HepG2 (cell line): ENCODE measurements at regions of chr16 and their contacts with region 1.

Region 1: GRCh38 chr16:81940781-81941560 is 70.3 kb downstream of the SDR42E1 start:
- DNase-seq: peak; percentile 47
- ATAC-seq: peak; percentile 55; the same call in 2 of the 3 replicates
- H3K4me3 ChIP-seq: no peak overlapping the region
- H3K27ac ChIP-seq: no peak overlapping the region
- H3K4me1 ChIP-seq: no peaks in the 10 kb centered on the region
- H3K27me3 ChIP-seq: peaks cover 0 to 30% of the 10 kb centered on the region in 2 experiments; a peak in 3 of 5 replicates
- CTCF ChIP-seq: peak; percentile 57
- EP300 ChIP-seq: no peak
- POLR2A ChIP-seq: no peak
- RAD21 ChIP-seq: no peak

Region 2: DNA sequence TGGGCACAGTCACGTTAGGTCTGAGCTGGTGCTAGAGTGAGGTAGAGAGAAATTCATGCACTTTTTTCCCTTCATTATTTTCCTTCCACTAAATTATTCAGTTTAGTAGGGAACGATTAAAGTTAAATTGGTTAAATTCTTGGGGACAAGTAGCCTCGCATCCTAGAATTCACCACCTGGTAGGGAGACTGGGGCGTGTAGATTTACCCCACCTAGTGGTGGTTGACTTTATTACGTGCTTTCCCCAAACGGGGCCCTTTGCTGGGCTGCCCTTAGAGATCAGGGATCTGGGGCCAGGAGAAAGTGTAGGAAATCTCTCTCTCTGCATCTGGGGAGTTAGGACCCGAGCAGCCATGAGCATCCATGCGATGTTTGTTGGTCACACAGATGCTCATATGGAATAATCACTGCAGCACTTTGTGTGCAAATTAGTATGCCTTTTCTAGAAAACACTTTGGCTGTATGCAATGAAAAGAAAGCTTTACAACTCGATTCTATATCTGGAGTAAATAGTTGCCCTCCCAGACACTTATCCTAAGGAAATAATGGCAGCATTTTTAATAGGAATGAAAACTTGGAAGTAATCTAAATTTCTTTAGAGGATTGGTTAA is 54.9 kb before region 1 on chr16:
- CTCF ChIA-PET with region 1: no interaction called
- POLR2A ChIA-PET with region 1: no interaction called
- in situ Hi-C with region 1: no loop called
- intact Hi-C with region 1: no loop called
- DNase-seq: peak; percentile 31
- ATAC-seq: peak; percentile 80
- H3K4me3 ChIP-seq: no peak overlapping the region
- H3K27ac ChIP-seq: no peak overlapping the region
- H3K4me1 ChIP-seq: peaks cover 34% of the 10 kb centered on the region
- H3K27me3 ChIP-seq: peaks cover 9 to 17% of the 10 kb centered on the region in 2 experiments; a peak in 2 of 5 replicates
- CTCF ChIP-seq: peak; percentile 68
- EP300 ChIP-seq: no peak
- POLR2A ChIP-seq: no peak
- RAD21 ChIP-seq: no peak

Region 3: DNA sequence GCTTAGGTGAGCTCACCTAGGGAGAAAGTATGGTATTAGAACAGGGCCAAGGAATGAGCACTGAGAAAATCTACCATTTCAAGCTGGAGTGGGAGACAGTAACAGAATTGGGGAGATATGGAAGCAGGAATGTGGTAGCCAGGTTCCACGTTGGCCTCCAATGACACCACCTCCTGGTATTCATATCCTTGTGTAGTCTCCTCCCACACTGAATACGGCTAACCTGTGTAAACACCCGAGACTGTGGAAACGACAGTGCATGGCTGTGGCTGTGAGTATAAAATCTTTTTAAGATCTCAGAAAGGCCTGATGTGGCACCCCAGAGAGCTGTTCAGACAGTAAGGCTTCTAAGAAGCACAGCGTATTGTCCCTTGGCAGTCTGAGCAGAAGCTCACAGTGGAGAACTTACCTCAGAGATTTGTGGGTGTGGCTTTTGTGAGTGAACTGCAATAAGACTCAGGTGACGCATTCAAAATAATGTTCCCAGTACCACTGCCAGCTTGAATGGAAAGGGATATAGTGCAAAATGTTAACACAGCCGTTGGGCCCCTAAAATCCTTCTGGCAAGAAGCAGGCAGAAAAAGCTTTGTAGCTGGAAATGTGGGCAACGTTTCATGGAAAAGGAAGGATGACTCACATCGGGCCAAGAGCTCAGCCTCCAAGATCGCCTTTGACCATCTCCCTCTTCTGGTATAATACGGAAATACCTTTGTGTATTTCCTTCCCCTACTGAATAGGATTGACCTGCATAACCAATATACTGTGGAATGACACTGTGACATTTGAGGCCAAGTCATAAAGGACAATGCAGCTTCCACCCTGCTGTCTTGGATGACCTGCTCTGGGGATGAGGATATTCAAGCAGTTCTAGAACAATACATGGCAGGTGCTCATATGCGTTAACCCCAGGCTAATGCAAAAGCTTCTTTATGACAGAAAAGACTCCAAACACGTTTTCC is 56.0 kb after region 1 on chr16:
- CTCF ChIA-PET with region 1: no interaction called
- POLR2A ChIA-PET with region 1: no interaction called
- in situ Hi-C with region 1: no loop called
- intact Hi-C with region 1: loop called (anchors 10 kb)
- DNase-seq: peak; percentile 52
- ATAC-seq: peak; percentile 88
- H3K4me3 ChIP-seq: no peak overlapping the region
- H3K27ac ChIP-seq: no peak overlapping the region
- H3K4me1 ChIP-seq: peaks cover 14% of the 10 kb centered on the region
- H3K27me3 ChIP-seq: peaks cover 0 to 4% of the 10 kb centered on the region in 2 experiments; a peak in 2 of 5 replicates
- CTCF ChIP-seq: peak; percentile 39
- EP300 ChIP-seq: no peak
- POLR2A ChIP-seq: no peak
- RAD21 ChIP-seq: no peak

Region 4: DNA sequence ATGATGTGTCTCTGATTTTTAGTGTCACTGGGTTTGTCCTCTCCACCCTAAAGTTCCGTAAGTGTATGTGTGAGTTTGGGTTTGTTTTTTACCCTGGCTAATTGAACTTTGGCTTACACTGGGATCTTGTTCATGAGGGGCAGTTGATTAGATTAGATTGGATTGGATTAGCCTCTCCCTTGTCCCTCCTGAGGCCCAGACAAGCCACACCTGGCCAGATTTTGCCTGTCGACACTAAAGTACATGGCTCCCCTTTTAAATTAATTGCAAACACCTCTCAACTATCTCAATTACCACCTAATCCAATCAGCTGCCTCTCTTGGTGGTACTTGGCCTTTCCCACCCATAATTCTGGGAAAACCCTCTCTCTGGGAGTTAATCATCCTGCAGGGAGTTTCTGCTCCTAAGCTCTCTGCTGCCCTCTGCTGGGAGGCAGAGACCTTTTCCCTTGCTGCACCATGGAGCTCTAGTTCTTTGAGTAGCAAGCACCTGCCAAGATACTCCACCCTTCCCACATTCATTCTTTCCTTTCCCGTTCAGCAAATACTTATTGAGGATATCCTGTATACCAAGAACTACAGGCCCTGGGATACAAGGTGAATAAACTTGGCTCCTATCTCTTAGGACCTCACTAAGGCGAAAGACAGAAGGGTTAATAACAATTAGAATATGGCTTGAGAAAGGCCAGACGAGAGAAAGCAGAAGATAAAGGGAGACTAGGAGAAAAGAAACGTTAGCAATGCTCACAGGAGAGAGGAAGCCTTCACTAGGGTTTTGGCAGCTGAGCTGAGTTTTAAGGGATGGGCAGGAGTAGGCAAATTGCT is 289.0 kb after region 1 on chr16:
- CTCF ChIA-PET with region 1: interaction called, 15 read pairs
- POLR2A ChIA-PET with region 1: no interaction called
- in situ Hi-C with region 1: loop called (anchors 10 kb)
- intact Hi-C with region 1: loop called (anchors 1 kb)
- DNase-seq: peak; percentile 75
- ATAC-seq: peak; percentile 94
- H3K4me3 ChIP-seq: no peak overlapping the region
- H3K27ac ChIP-seq: no peak overlapping the region
- H3K4me1 ChIP-seq: no peaks in the 10 kb centered on the region
- H3K27me3 ChIP-seq: no peaks in the 10 kb centered on the region
- CTCF ChIP-seq: peak; percentile 94
- EP300 ChIP-seq: no peak
- POLR2A ChIP-seq: no peak
- RAD21 ChIP-seq: peak; percentile 90